Panc1 (cell line): ENCODE measurements at regions of chr10 and their contacts with region 1.

Region 1: GRCh38 chr10:99975106-99975829 is 34.5 kb downstream of the DNMBP start:
- DNase-seq: no peak
- ATAC-seq: no peak
- H3K4me3 ChIP-seq: no peak overlapping the region
- H3K27ac ChIP-seq: peak overlapping the region; percentile 78; the same call in 1 of the 2 replicates
- H3K4me1 ChIP-seq: peaks cover 43% of the 10 kb centered on the region
- H3K27me3 ChIP-seq: no peaks in the 10 kb centered on the region
- CTCF ChIP-seq: no peak

Region 2: GRCh38 chr10:100004805-100005510 is 29.7 kb after region 1 on chr10:
- CTCF ChIA-PET with region 1: no interaction called
- POLR2A ChIA-PET with region 1: interaction called, 10 read pairs
- in situ Hi-C with region 1: no loop called
- intact Hi-C with region 1: no loop called
- DNase-seq: no peak
- ATAC-seq: no peak
- H3K4me3 ChIP-seq: peak overlapping the region; percentile 27 to 91
- H3K27ac ChIP-seq: peak overlapping the region; percentile 99
- H3K4me1 ChIP-seq: peaks cover 68% of the 10 kb centered on the region
- H3K27me3 ChIP-seq: no peaks in the 10 kb centered on the region
- CTCF ChIP-seq: no peak